Activated T-helper 2 cell treated with anti-CD3 and anti-CD28 coated beads, Interferon-gamma antibody, Interleukin-2, Interleukin-4, amounts not matched to agents 10 μg/mL and 5 μg/mL and 100 μg/mL, durations not matched to agents 14 hours and 24 hours and 36 hours (primary cell): ENCODE measurements at regions of chr3 and their contacts with region 1.

Region 1: GRCh38 chr3:112973325-112974177 is 1.4 kb downstream of the CD200R1 start:
- DNase-seq: peak; percentile 34
- H3K4me3 Mint-ChIP-seq: peak overlapping the region; percentile 84
- H3K27ac Mint-ChIP-seq: peak overlapping the region; percentile 94
- H3K4me1 Mint-ChIP-seq: peaks cover 73% of the 10 kb centered on the region
- H3K27me3 Mint-ChIP-seq: no peaks in the 10 kb centered on the region

Region 2: GRCh38 chr3:112561731-112562688 is 411.5 kb before region 1 on chr3 and contains the starts of genes ATG3 and SLC35A5:
- intact Hi-C with region 1: loop called (anchors 1 kb)
- DNase-seq: peak; percentile 98
- H3K4me3 Mint-ChIP-seq: peak within 1 kb of the TSS; percentile 92
- H3K27ac Mint-ChIP-seq: peak within 1 kb of the TSS; percentile 99
- H3K4me1 Mint-ChIP-seq: peaks cover 49% of the 10 kb centered on the region
- H3K27me3 Mint-ChIP-seq: no peaks in the 10 kb centered on the region
- total RNA-seq, gene ATG3: 61.1 and 61.6 TPM in 2 replicates
- total RNA-seq, gene SLC35A5: 12.6 and 17.8 TPM in 2 replicates

Region 3: DNA sequence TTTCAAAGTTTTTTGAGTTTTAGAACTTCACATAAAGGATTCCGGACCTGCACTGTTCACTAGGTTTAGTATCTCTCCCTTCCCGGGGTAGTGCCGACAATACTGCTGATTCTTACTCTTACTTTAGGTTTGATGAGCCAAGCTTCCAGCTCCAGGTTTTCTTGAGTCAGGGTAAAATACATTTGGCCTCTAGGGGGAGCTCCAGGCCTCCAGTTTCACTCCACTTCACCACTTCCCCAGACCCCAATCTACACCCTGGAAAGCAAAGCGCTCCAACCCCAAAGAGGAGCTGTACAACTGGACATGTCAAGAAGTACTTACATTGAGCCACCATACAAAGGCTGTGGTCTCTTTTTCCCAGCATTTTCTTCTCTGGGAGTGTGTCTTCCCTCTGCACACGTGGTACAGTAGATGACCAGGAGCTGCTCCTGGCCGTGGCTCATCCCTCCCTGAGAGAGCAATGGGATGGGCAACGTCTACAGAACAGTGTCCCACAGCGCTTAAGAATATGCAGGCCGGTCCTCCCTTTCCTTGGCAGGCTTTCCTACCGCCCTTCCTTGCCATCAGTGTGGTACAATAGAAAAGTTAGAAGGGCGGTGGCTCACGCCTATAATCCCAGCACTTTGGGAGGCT is 238.7 kb before region 1 on chr3:
- intact Hi-C with region 1: loop called (anchors 1 kb)
- DNase-seq: peak; percentile 51
- H3K4me3 Mint-ChIP-seq: no peak overlapping the region
- H3K27ac Mint-ChIP-seq: no peak overlapping the region
- H3K4me1 Mint-ChIP-seq: peaks cover 47% of the 10 kb centered on the region
- H3K27me3 Mint-ChIP-seq: no peaks in the 10 kb centered on the region

Region 4: DNA sequence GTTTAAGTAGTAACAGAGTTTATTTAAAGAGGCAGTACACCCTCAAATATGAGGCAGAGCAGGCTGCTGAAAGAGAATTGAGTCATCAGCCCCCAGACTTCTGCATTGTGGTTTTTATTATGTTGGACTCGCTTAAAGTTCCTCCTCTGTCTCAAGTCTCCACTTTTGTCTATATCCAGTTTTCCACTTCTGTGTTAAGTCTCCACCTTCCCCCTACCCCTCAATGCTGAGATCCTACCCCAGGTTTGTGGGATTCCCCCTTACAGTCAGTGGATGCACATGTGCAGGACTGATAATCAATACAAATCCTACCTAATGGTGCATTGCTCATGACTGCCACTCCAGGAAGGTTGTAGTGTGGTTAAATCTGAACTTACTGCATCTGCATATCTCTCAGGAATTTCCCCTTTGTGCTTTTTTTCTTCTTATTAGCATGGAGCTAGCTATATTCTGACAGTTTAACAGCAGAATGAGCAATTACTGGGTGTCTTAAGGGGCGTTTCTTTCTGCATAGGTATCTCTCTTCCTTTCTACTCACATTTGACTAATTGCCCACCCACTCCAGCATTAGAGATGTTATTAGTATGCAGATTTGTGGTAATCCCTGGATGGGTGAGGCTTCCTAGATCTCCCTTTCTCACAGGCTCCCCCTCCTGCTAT is 115.0 kb before region 1 on chr3:
- intact Hi-C with region 1: loop called (anchors 1 kb)
- DNase-seq: no peak
- H3K4me3 Mint-ChIP-seq: peak overlapping the region; percentile 0
- H3K27ac Mint-ChIP-seq: peak overlapping the region; percentile 34
- H3K4me1 Mint-ChIP-seq: peaks cover 30% of the 10 kb centered on the region
- H3K27me3 Mint-ChIP-seq: no peaks in the 10 kb centered on the region

Region 5: DNA sequence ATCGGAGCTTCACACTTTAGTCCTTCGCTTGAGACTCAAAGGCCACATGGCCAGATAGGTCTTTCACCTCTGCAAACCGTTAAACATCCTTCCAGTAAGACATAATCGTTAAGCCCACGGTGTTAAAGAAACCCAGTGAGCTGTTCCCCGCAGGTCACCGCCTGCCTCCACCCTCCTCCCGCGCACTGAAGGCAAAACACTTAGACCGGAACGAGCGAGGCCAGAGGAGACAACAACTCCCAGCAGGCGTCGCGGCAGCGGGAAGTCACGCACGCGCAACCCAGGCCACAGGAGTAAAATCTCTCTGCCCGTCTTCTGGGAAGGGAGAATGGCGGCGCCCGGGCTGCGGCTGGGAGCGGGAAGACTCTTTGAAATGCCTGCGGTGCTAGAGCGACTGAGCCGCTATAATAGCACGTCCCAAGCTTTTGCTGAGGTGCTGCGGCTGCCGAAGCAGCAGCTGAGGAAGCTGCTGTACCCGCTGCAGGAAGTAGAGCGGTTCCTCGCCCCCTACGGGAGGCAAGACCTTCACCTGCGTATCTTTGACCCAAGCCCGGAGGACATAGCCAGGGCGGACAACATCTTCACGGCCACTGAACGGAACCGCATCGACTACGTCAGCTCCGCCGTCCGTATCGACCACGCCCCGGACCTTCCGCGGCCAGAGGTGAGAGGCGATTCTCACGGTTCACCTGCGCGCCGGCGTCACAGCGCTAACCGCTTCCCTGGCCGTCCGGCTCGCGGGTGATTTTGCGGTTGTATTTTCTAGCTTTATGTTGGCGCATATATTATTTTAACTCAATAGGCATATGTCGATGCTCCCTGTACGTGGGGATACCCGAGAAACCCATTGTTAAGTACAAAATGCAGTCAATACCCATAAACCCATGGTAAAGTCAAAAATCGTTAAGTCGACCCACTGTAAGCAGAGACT is 17.4 kb after region 1 on chr3 and contains the start of gene GTPBP8:
- intact Hi-C with region 1: loop called (anchors 2 kb)
- DNase-seq: peak; percentile 79
- H3K4me3 Mint-ChIP-seq: peak within 1 kb of the TSS; percentile 80
- H3K27ac Mint-ChIP-seq: peak within 1 kb of the TSS; percentile 84
- H3K4me1 Mint-ChIP-seq: peaks cover 49% of the 10 kb centered on the region
- H3K27me3 Mint-ChIP-seq: no peaks in the 10 kb centered on the region
- total RNA-seq, gene GTPBP8: 17.6 and 22.7 TPM in 2 replicates

Region 6: GRCh38 chr3:113019182-113020137 is 45.9 kb after region 1 on chr3:
- intact Hi-C with region 1: loop called (anchors 1 kb)
- DNase-seq: peak; percentile 73
- H3K4me3 Mint-ChIP-seq: peak overlapping the region; percentile 93
- H3K27ac Mint-ChIP-seq: peak overlapping the region; percentile 94
- H3K4me1 Mint-ChIP-seq: peaks cover 38% of the 10 kb centered on the region
- H3K27me3 Mint-ChIP-seq: no peaks in the 10 kb centered on the region